ENCODE measurements at regions of chr2 and their contacts with region 1.

Region 1: DNA sequence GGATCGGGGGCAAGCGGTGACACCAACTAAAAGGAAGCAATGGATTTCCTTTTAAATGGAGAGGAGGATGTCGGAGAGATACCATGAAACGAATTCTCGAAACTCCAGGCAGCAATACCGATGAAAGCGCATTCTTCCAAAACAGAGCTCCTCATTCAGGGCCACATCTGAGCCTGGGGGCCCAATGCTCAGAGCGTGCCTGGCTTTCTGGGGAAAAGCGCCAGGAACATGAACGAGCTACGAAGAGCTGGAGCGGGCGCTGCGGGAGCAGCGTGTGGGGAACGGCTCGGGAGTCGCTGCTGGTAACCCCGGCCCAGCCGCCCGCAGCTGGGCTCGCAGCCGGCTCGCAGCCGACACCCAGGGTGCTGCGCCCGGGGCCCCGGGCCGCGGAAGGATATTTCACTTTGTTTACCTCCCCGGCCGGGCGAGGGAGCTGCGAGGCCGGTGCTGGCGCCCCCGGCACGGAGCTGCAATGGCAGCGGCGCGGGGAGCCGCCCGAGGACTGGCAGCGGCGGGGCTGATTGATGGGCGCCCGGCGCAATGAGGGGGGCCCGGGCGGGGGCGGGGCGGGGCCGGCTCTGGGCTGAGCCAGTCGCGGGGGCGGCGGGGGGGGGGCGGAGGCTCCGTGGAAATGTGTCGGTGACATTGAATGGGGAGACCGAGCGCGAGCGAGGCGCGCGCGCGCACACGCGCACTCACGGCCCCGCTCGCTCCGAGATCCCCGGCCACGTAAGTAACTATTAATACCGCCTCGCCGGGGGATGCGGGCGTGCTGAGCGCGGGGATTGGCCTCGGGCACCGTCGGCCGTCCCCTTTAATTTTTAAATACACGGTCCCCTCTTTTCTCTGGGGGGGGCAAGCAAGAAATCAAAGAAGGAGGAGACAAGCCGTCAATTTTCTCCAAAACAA is at the start of gene TRIB2:
- DNase-seq: peak; percentile 80 to 98 (median 88)
- ATAC-seq: peak; percentile 80
- H3K4me3 Mint-ChIP-seq: peak within 1 kb of the TSS; percentile 92 to 100 (median 100)
- H3K27ac Mint-ChIP-seq: peak within 1 kb of the TSS; percentile 94 to 98 (median 97)
- H3K4me1 Mint-ChIP-seq: peaks cover 32 to 62% (median 51%) of the 10 kb centered on the region in 4 donors
- H3K27me3 Mint-ChIP-seq: no peaks in the 10 kb centered on the region
- polyA plus RNA-seq, gene TRIB2: 22.5 to 30.5 (median 27.4) TPM

Region 2: DNA sequence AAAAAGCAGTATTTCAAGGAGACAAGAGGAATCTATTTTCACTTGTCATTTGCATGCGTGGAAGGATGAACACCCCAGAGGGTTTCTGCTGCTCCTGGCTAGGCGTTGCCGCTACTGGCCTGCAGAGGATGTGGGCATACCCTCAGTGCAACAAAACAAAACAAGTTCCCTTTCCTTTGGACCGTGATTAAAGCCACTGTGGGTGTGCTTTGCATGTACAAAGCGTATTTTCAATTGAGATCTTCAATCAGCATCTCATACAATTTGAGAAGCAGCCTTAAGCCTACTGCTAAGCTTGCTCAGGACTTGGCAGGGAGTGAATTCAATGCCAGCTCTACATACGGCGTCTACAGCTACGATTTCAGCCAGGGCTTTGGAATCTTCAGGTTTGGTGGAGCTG is 671.7 kb before region 1 on chr2:
- POLR2A ChIA-PET with region 1: interaction called, 14 read pairs
- DNase-seq: peak in 8 of 10 donors; percentile 19 to 84 (median 56)
- ATAC-seq: peak; percentile 98
- H3K4me3 Mint-ChIP-seq: peak overlapping the region; percentile 29 to 59 (median 50)
- H3K27ac Mint-ChIP-seq: peak overlapping the region in 8 of 10 donors; percentile 4 to 85 (median 64)
- H3K4me1 Mint-ChIP-seq: peaks cover 32 to 85% (median 79%) of the 10 kb centered on the region in 4 donors
- H3K27me3 Mint-ChIP-seq: peaks cover 0 to 4% (median 0%) of the 10 kb centered on the region in 5 donors

Region 3: GRCh38 chr2:12110074-12110473 is 606.5 kb before region 1 on chr2:
- POLR2A ChIA-PET with region 1: interaction called, 10 read pairs
- DNase-seq: peak in 7 of 10 donors; percentile 4 to 77 (median 38)
- ATAC-seq: peak; percentile 88 to 93
- H3K4me3 Mint-ChIP-seq: peak overlapping the region; percentile 35 to 81 (median 68)
- H3K27ac Mint-ChIP-seq: peak overlapping the region; percentile 32 to 93 (median 72)
- H3K4me1 Mint-ChIP-seq: peaks cover 25 to 59% (median 51%) of the 10 kb centered on the region in 4 donors
- H3K27me3 Mint-ChIP-seq: no peaks in the 10 kb centered on the region

Region 4: DNA sequence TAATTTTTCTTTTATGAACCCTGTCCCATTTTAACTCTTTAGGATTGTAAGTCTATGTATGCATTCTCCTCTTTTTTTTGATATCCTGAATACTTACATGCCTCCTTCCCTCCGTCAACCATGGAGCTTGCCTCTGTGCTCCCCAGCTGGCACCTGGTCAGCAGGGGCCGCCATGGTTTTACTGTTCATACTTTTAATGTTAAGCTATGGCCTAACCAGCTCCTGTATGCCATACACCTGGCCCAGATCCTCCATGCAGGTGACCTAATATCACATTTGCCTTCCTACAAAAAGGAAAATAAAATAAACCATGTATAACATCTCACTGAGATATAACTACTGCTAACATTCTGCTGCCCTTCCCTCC is 282.9 kb before region 1 on chr2:
- POLR2A ChIA-PET with region 1: interaction called, 17 read pairs
- DNase-seq: no peak
- ATAC-seq: no peak
- H3K4me3 Mint-ChIP-seq: no peak overlapping the region
- H3K27ac Mint-ChIP-seq: peak overlapping the region in 2 of 10 donors; percentile 54 to 62
- H3K4me1 Mint-ChIP-seq: peaks cover 19 to 49% (median 36%) of the 10 kb centered on the region in 4 donors
- H3K27me3 Mint-ChIP-seq: no peaks in the 10 kb centered on the region

Region 5: DNA sequence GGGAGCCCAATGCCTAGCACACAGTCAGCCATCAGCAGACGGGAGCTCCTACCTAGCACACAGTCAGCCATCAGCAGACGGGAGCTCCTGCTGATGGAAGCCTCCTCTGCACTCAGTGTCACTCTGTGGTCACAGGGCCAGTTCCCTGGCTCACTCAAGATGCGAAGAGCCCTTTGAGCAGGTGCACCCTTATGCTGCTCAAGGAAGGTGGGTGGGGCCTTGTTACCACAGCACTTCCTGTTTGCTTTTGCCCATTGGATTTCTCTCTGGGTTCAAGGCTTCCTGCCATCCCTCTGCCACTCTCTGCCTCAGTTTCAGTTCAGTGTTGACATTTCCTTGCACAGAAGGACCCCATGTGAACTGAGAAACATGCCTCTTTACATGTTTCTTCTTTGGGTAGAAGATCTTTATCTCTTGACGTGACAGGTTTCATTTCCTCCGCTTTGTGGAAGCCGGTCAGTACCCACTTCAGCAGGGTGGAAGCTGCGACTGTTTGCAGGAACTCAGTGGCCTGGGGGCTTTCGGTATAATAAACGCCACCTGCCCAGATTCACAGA is 11.8 kb after region 1 on chr2:
- POLR2A ChIA-PET with region 1: interaction called, 43 read pairs
- DNase-seq: peak in 9 of 10 donors; percentile 29 to 86 (median 73)
- ATAC-seq: peak; percentile 87 to 89
- H3K4me3 Mint-ChIP-seq: peak overlapping the region; percentile 55 to 85 (median 76)
- H3K27ac Mint-ChIP-seq: peak overlapping the region; percentile 81 to 94 (median 90)
- H3K4me1 Mint-ChIP-seq: peaks cover 38 to 96% (median 82%) of the 10 kb centered on the region in 4 donors
- H3K27me3 Mint-ChIP-seq: no peaks in the 10 kb centered on the region

Region 6: GRCh38 chr2:12931186-12931844 is 214.8 kb after region 1 on chr2:
- POLR2A ChIA-PET with region 1: interaction called, 22 read pairs
- DNase-seq: peak in 4 of 10 donors; percentile 5 to 34 (median 32)
- ATAC-seq: peak in 1 of 2 donors; percentile 54
- H3K4me3 Mint-ChIP-seq: no peak overlapping the region
- H3K27ac Mint-ChIP-seq: no peak overlapping the region
- H3K4me1 Mint-ChIP-seq: peaks cover 0 to 6% (median 4%) of the 10 kb centered on the region in 4 donors
- H3K27me3 Mint-ChIP-seq: peaks cover 7 to 45% (median 11%) of the 10 kb centered on the region in 5 donors